Esophagus squamous epithelium (tissue), 5 donors: ENCODE measurements at regions of chr4 and their contacts with region 1.

Region 1: GRCh38 chr4:76067652-76068286 is 6.7 kb upstream of the ART3 start:
- DNase-seq: no peak
- H3K4me3 ChIP-seq: no peak overlapping the region
- H3K27ac ChIP-seq: no peak overlapping the region
- H3K4me1 ChIP-seq: no peaks in the 10 kb centered on the region
- H3K27me3 ChIP-seq: no peaks in the 10 kb centered on the region
- CTCF ChIP-seq: peak; percentile 37 to 80 (median 77)
- POLR2A ChIP-seq: no peak

Region 2: GRCh38 chr4:75973766-75974165 is 94.0 kb before region 1 on chr4:
- intact Hi-C with region 1: no loop called
- DNase-seq: no peak
- H3K4me3 ChIP-seq: no peak overlapping the region
- H3K27ac ChIP-seq: no peak overlapping the region
- H3K4me1 ChIP-seq: no peaks in the 10 kb centered on the region
- H3K27me3 ChIP-seq: no peaks in the 10 kb centered on the region
- CTCF ChIP-seq: no peak
- POLR2A ChIP-seq: no peak

Region 3: DNA sequence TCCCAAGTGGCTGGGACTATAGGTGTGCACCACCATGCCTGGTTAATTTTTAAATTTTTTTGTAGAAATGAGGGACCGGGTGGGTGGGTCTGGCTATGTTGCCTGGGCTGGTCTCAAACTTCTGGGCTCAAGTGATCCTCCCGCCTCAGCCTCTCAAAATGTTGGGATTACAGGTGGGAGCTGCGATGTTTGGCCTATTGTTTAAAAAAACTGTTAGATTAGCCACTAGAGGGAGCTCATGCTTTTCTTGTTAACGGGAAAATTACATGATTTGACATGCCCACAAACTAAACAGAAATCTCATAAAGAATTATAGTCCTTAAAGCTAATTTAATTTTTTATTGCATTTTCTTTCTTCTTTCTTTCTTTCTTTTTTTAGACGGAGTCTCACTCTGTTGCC is 72.0 kb before region 1 on chr4:
- intact Hi-C with region 1: loop called (anchors 5 kb)
- DNase-seq: no peak
- H3K4me3 ChIP-seq: no peak overlapping the region
- H3K27ac ChIP-seq: no peak overlapping the region
- H3K4me1 ChIP-seq: peaks cover 0 to 6% (median 4%) of the 10 kb centered on the region in 3 donors
- H3K27me3 ChIP-seq: no peaks in the 10 kb centered on the region
- CTCF ChIP-seq: peak; percentile 39 to 70 (median 60)
- POLR2A ChIP-seq: no peak

Region 4: DNA sequence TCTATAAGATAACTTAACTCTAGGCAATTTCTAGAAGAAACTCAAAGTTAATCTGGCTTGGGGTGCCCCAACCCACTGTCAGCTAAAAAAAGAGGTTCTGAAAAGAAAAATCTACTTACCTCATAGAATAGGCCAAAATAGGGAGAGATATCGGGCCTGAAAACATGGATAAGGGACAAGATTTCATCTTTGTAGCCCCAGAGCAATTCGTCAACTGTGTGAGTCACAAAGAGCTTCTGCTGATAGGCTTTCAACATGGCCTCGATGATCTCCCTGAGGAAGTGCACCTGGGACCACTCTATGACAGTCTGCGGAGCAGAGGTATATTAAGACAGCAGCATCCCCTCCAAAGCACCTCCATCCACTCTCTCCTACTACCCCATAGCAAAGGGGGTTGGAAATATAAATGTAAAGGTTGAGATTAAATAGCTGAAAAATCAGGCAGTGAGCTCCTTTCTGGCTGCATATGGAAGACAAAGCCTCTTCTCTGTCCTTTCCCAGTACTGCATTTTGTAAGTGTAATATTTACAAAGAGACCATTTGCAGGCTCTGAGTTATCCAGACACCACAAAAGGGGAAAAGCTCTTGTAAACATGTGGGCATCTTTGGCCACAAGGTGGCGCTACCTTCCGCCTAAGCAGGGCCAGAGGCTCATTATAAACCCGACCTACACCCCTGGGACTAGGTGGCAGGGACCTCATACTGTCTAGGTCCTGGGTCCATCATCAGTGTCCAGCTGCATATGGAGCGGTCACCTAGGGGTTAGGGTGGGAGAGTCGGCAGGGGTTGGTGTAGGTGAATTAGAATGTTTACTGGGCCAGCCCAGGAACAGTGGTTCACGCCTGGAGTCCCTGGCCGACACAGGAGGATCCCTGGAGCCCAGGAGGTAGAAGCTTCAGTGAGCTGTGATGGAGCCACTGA is 111.9 kb after region 1 on chr4:
- intact Hi-C with region 1: no loop called
- DNase-seq: peak; percentile 20
- H3K4me3 ChIP-seq: no peak overlapping the region
- H3K27ac ChIP-seq: no peak overlapping the region
- H3K4me1 ChIP-seq: peaks cover 0 to 7% (median 0%) of the 10 kb centered on the region in 3 donors
- H3K27me3 ChIP-seq: no peaks in the 10 kb centered on the region
- CTCF ChIP-seq: peak; percentile 81 to 94 (median 88)
- POLR2A ChIP-seq: no peak

Region 5: GRCh38 chr4:76266627-76267026 is 198.9 kb after region 1 on chr4:
- intact Hi-C with region 1: no loop called
- DNase-seq: no peak
- H3K4me3 ChIP-seq: no peak overlapping the region
- H3K27ac ChIP-seq: no peak overlapping the region
- H3K4me1 ChIP-seq: no peaks in the 10 kb centered on the region
- H3K27me3 ChIP-seq: peaks cover 0 to 30% (median 0%) of the 10 kb centered on the region in 4 donors
- CTCF ChIP-seq: no peak
- POLR2A ChIP-seq: no peak